Psoas muscle (tissue), 8 donors: ENCODE measurements at regions of chr5 and their contacts with region 1.

Region 1: GRCh38 chr5:123423278-123424149 is at the start of gene CEP120:
- DNase-seq: peak; percentile 98 to 99
- ATAC-seq: peak; percentile 99 to 100 (median 100)
- H3K4me3 ChIP-seq: peak within 1 kb of the TSS; percentile 89
- H3K27ac ChIP-seq: peak within 1 kb of the TSS; percentile 83
- H3K4me1 ChIP-seq: peaks cover 11% of the 10 kb centered on the region
- H3K27me3 ChIP-seq: no peaks in the 10 kb centered on the region
- CTCF ChIP-seq: peak; percentile 77
- total RNA-seq, gene CEP120: 3.9 to 15.0 (median 6.3) TPM

Region 2: GRCh38 chr5:123500471-123500870 is 77.0 kb after region 1 on chr5:
- intact Hi-C with region 1: no loop called
- DNase-seq: no peak
- ATAC-seq: no peak
- H3K4me3 ChIP-seq: no peak overlapping the region
- H3K27ac ChIP-seq: no peak overlapping the region
- H3K4me1 ChIP-seq: no peaks in the 10 kb centered on the region
- H3K27me3 ChIP-seq: no peaks in the 10 kb centered on the region
- CTCF ChIP-seq: no peak

Region 3: DNA sequence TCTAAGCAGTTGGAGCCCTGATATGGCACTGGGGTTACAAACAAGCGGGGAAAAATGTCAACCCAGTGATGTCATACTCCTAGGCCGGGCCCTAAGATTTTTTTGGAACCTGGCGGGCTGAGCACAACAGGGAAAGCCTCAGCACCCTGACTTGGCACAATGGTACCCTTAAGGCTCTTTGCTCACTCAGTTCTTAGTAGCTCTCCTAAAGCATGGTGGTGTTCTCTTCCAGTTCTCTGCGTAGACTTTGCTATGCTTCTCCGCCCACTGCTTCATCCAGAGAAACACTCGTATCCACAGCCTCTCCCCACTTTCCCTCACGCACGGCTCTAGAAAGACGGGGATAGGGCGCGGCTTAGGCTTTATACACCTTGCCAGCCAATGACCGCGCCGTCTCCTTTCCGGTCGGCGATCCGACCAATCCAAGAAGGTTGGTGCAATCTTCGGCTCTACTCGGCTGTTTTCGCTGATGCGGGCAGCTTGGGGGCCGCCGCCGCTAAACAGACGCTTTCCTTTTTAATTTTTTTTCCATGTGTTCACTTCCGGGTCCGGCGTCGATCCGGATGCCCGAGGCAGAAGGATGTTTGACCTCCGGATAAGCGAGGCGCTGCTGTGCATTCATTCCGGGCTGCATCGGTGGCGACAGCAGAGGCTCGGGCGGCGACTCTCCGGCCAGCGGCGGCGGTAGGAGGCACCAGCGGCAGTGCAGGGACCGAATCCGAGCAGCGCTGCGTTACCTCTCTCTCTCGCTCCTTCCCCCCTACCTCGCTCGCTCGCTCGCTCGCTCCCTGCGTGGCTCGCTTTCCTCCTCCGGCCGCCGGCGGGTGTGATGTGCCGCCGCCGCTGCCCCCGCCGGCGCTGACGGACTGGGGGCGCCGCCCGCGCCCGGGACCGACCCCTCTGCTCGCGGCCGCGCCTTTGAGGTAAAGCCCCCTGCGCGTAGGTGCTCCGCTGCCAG is 88.4 kb after region 1 on chr5 and contains the start of gene CSNK1G3:
- intact Hi-C with region 1: loop called (anchors 2 to 10 kb)
- DNase-seq: peak; percentile 97 to 98
- ATAC-seq: peak; percentile 97 to 99 (median 98)
- H3K4me3 ChIP-seq: peak within 1 kb of the TSS; percentile 88
- H3K27ac ChIP-seq: peak within 1 kb of the TSS; percentile 91
- H3K4me1 ChIP-seq: peaks cover 6% of the 10 kb centered on the region
- H3K27me3 ChIP-seq: no peaks in the 10 kb centered on the region
- CTCF ChIP-seq: no peak
- total RNA-seq, gene CSNK1G3: 11.3 to 19.4 (median 16.2) TPM

Region 4: GRCh38 chr5:123610665-123611405 is 187.3 kb after region 1 on chr5:
- intact Hi-C with region 1: loop called (anchors 1 to 5 kb)
- DNase-seq: no peak
- ATAC-seq: peak; percentile 60 to 88 (median 65)
- H3K4me3 ChIP-seq: no peak overlapping the region
- H3K27ac ChIP-seq: no peak overlapping the region
- H3K4me1 ChIP-seq: no peaks in the 10 kb centered on the region
- H3K27me3 ChIP-seq: no peaks in the 10 kb centered on the region
- CTCF ChIP-seq: peak; percentile 99